ENCODE measurements at regions of chr10 and their contacts with region 1.

Region 1: DNA sequence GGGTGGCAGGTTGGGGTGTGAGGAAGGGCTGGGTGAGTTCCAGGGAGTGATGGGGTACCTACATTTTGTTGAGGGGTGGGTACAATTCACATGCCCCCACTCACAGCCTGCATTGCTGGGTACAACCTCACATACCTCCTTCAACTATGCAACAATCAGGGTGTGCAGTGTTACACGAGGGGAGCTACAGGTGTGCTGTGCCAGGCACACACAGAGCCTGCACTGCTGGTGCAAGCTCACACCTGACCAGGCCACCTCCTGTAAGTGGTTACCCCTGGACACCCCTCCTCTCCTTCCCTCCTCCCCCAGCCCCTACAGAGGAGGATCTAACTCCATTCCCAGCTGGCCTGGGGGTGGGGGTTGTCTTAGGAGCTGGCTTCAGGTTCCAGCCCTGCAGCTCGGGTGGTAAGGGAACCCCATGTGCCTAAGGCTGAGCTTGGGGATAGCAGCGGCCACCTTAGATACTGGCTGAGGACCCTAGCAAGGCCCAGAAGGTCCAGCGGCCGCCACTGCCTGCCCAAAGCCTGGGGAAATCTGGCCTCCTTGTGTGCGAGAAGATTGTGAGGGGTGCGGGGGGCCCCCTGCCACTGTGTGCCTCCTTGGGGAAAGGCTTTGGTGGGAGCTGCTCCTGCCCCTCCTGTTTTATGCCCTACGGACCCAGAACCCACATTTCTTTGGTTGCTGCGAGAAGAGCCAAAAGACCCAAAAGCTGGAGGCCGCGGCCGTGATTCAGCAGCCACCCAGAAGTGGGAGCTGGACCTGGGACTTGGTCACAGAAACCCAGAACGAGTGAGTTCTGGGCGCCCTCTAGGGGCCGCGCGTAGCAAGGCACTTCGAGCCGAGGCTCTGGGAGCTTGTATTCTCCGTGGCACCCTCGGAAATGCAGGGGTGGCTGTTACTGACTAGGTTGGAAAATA is 10.8 kb downstream of the TLX1 start:
- DNase-seq: peak; percentile 91
- ATAC-seq: peak; percentile 49
- H3K4me3 Mint-ChIP-seq: no peak overlapping the region; the same call in 1 of the 2 replicates
- H3K27ac Mint-ChIP-seq: no peak overlapping the region
- H3K4me1 Mint-ChIP-seq: peaks cover 24% of the 10 kb centered on the region
- H3K27me3 Mint-ChIP-seq: peaks cover 100% of the 10 kb centered on the region
- CTCF ChIP-seq: peak; percentile 95

Region 2: DNA sequence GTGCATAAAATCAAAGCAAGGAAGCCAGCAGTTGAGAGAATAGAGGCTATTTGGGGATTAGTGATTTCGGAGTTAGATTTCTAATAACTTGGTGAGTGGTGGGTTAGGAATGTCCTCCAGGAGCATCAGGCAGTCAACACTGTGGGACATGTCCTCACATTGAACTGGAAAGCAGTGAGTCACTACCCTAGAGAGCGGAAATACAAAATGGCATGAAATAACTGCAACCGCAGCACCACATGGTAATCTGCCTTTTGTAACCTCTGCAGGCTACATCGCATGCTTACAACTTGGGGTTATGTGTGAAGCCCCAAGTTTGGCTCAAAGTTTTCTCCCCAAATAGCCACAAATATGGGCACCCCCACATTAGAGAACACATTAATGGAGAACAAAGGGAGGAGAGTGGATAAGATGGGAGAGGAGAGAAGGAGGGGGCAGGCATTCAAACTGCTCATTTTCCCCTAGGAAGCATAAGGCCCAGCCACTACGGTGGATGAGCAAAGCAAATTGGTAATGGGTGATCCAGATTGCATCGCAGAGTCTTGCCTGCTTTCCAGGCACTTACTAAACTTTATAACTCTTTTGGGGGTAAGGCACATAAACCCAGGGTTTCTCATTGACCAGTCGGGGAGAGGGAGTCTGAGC is 251.1 kb before region 1 on chr10:
- CTCF ChIA-PET with region 1: no interaction called
- POLR2A ChIA-PET with region 1: no interaction called
- DNase-seq: no peak
- ATAC-seq: peak; percentile 61
- H3K4me3 Mint-ChIP-seq: no peak overlapping the region
- H3K27ac Mint-ChIP-seq: no peak overlapping the region
- H3K4me1 Mint-ChIP-seq: peaks cover 14% of the 10 kb centered on the region
- H3K27me3 Mint-ChIP-seq: peaks cover 6% of the 10 kb centered on the region; the same call in 1 of the 2 replicates
- CTCF ChIP-seq: no peak

Region 3: DNA sequence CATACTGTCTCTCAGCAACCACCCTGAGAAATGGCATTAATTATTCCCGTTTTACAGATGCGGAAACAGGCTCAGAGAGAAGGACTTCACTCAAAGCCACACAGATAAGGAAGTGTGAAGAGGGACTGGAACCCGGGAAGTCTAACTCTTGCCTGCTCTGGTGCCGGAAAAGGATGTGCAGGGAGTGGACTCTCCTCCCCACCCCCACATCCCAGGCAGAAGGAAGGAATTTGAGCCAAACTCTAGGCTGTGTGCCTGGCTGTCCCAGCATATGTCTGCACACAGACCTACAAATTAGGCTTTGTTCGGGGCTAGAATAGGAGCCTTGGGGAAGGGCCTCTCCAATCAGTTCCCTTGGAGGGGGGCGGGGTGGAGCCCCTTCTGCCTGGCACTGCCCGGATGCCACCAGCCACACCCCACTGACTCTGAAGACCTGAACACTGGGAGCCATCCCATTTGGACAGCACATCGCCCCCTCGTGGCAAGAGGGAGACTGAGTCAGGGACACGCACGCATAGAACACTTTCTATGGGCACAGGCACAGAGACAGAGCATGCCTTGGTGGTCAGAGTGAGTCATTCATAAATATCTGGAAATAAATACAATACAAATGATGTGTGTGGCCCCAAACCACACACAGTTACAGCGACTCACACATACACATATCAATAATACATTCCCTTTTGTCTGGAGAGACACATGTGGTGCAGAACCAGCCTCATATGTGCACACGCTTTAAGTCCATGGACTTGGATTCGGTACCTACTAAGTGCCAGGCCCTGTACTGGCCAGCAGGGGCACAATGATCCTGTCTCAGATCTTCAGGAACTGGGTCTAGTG is 129.1 kb before region 1 on chr10:
- CTCF ChIA-PET with region 1: interaction called, 23 read pairs
- POLR2A ChIA-PET with region 1: no interaction called
- DNase-seq: peak; percentile 84
- ATAC-seq: peak; percentile 68
- H3K4me3 Mint-ChIP-seq: no peak overlapping the region
- H3K27ac Mint-ChIP-seq: no peak overlapping the region
- H3K4me1 Mint-ChIP-seq: peaks cover 33% of the 10 kb centered on the region
- H3K27me3 Mint-ChIP-seq: peaks cover 34% of the 10 kb centered on the region
- CTCF ChIP-seq: peak; percentile 63

Region 4: DNA sequence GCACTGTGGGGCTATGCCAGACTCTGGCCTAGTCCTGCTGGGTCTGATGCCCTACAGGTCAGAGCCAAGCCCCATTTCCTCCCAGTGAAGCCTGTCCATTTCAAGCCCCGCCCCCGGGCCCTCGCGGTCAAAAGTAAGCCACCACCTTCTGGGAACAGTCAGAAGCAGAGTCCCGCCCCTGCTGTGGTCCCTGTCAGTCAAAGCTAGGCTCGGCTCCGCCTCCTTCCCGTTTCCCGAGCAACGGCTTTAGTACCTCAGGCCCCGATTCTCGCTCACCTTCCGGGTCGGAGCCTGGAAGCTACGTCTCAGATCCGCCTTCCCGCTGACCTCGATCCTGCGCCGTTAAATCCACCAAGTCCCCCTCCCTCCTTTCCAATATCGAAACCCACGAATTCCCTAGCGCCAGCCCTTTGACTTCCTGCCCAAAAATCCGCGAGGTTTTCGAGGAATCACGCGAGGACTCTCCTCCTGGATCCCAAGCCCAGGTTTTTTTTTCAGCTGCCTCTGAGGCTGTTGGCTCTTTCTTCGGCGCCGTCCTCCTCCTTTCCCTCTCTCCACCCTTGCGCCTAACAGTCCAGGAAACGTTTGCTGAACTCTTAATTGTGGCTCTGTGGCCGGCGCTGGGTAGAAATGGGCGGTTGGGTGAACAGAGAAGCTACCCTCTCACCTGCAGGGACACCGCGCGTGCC is 99.1 kb before region 1 on chr10:
- CTCF ChIA-PET with region 1: interaction called, 181 read pairs
- POLR2A ChIA-PET with region 1: interaction called, 6 read pairs
- DNase-seq: peak; percentile 99
- ATAC-seq: peak; percentile 86
- H3K4me3 Mint-ChIP-seq: peak overlapping the region; percentile 94
- H3K27ac Mint-ChIP-seq: peak overlapping the region; percentile 92
- H3K4me1 Mint-ChIP-seq: peaks cover 33% of the 10 kb centered on the region
- H3K27me3 Mint-ChIP-seq: peaks cover 59% of the 10 kb centered on the region
- CTCF ChIP-seq: no peak

Region 5: DNA sequence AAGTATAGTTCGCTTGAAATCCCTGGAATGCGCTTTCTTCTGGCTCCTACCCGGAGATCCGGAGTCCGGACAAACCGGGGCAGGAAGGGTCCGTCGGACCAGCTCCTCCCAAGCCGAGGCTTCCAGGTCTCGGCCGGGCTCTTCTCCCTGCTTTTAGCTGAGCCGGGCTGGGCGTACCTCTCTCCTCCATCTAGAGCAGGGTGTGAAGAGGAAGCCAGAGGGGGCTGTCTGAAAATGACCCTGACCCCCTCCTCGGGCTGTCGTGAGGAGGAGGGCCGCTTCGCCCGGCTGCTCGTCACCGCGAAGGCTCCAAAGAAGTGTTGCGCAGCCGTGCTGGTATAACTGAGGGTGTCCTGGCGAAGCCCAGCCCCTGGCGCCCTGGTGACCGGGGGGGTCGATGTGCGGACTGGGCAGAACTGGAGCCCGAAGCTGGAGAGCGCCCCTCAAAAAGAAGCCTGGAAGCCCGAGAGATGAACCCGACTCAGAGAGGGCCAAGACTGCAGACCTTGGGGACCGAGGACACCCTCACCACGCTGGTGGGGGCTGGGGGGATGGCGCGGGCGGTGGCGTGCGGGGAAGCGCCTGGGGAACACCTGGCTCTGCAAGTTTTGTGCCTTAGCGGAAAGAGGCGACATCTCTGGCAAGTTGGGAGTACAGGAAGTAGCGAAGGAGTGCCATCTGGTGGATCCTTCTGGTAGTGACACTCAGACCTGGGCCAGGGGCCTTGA is 74.4 kb before region 1 on chr10:
- CTCF ChIA-PET with region 1: interaction called, 162 read pairs
- POLR2A ChIA-PET with region 1: interaction called, 3 read pairs
- DNase-seq: peak; percentile 89
- ATAC-seq: peak; percentile 26
- H3K4me3 Mint-ChIP-seq: peak overlapping the region; percentile 93
- H3K27ac Mint-ChIP-seq: no peak overlapping the region
- H3K4me1 Mint-ChIP-seq: peaks cover 42% of the 10 kb centered on the region
- H3K27me3 Mint-ChIP-seq: peaks cover 72% of the 10 kb centered on the region
- CTCF ChIP-seq: peak; percentile 68

Region 6: DNA sequence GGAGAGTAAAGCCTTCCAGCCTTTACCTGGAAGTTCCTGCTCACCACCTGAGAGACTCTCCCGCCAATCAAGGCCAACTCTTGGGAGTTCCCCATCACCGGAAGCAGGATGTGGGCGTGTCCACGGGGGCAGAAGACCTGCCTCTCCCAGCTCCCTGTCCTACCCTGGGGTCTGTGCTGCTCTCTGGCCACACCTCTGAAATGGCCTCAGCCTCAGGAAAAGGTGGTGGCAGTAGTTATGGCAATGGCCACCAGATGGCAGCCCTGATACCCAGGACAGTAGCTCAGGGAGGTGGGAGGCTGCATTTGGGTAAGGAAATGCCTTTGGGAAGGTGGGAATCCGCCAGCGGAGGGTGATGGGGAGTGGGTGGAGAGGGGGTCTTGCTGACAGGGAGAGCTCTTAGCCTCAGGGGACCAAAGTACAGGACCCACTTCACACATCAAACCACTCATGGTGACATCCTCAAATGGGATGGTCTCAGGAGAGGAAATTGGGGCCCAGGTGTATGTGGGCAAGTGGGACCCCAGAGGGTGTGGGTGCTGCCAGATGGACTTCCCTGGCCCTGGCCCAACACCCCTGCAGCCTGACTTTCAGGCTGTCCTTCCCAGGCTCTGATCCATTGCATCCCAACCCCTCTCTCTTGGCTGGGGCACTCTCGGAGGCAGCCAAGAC is 46.2 kb before region 1 on chr10:
- CTCF ChIA-PET with region 1: interaction called, 509 read pairs
- POLR2A ChIA-PET with region 1: interaction called, 18 read pairs
- DNase-seq: peak; percentile 99
- ATAC-seq: peak; percentile 99
- H3K4me3 Mint-ChIP-seq: no peak overlapping the region
- H3K27ac Mint-ChIP-seq: no peak overlapping the region
- H3K4me1 Mint-ChIP-seq: peaks cover 22% of the 10 kb centered on the region
- H3K27me3 Mint-ChIP-seq: peaks cover 12% of the 10 kb centered on the region
- CTCF ChIP-seq: peak; percentile 64

Region 7: DNA sequence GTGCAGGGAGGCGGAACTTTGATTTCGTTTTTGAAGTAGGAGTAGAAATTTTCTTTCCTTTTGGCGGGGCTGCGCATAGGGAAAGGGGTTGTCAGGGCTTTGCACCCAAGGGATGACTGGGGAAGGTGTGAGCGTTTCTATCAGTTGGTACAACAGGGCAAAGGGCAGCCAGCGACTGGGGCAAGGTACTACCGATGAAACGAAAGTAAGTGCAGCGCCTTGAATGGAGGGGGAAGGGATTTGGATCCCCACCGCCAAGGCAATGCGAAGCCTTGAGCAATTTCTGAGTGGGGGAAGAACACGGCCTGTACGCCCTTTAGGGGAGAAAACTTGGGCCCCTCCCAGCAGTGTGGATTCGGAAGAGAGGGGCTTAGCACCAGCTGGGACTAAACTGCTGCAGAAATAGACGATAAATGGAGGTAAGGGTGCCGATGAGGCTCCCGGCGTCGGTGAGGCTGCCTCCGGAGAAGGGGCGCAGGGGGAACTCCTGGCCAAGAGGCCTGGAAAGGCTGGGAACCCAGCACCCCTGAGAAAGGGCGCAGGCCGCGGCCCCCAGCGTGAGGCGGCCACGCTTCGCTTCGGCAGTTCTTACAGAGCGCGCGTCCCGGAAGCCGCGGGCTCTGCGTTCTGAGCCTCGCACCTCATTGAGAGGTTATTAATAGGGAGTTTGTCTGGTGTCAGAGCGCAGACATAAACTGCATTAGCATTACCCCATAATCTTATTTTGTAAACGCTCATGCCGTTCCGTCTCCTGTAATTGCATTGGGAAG is 20.8 kb before region 1 on chr10:
- CTCF ChIA-PET with region 1: interaction called, 73 read pairs
- POLR2A ChIA-PET with region 1: no interaction called
- DNase-seq: no peak
- ATAC-seq: no peak
- H3K4me3 Mint-ChIP-seq: peak overlapping the region; percentile 72
- H3K27ac Mint-ChIP-seq: no peak overlapping the region
- H3K4me1 Mint-ChIP-seq: peaks cover 20% of the 10 kb centered on the region
- H3K27me3 Mint-ChIP-seq: peaks cover 98% of the 10 kb centered on the region
- CTCF ChIP-seq: no peak

Region 8: DNA sequence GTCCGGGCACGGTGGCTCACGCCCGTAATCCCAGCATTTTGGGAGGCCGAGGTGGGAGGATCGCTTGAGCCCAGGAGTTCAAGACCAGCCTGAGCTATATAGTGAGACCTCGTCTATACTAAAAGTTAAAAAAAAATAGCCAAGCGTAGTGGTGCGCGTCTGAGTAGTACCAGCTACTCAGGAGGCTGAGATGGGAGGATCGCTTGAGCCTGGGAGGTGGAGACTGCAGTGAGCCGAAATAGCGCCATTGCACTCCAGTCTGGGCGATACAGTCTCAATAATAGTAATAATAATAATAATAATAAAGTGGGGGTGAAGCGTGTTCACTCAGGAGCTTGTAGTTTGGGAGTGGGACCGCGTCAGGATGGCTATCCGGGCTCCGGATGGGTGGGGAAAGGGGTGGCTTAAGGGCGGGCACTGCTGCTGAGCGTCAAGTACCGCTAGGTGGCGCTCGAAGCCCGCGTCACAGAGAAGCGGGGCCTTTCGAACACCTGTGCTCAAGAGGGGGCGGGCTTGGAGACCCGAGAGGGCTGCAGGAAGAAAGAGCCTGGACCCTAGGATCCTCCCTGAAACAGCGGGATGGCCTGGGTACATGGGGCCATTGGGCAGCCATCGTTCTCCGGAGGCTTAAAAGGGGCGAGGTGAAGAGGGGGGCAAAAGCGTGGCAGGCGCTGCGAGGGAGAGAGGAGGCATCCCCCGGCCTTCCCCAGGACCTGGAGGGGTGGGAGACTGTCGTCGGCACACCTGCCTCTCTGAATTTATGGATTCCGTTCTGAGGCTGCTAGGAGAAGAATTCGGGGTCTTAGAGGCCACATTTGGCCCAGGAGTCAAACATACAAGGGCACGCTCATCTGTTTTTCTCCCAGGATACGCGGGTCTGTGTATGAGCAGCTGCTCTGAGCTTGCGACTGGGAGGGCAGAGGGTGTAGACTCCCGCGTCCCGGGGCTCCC is 72.8 kb after region 1 on chr10:
- CTCF ChIA-PET with region 1: interaction called, 21 read pairs
- POLR2A ChIA-PET with region 1: no interaction called
- DNase-seq: peak; percentile 93
- ATAC-seq: peak; percentile 65
- H3K4me3 Mint-ChIP-seq: peak overlapping the region; percentile 76
- H3K27ac Mint-ChIP-seq: no peak overlapping the region
- H3K4me1 Mint-ChIP-seq: peaks cover 30% of the 10 kb centered on the region
- H3K27me3 Mint-ChIP-seq: peaks cover 96% of the 10 kb centered on the region
- CTCF ChIP-seq: peak; percentile 83

Region 9: DNA sequence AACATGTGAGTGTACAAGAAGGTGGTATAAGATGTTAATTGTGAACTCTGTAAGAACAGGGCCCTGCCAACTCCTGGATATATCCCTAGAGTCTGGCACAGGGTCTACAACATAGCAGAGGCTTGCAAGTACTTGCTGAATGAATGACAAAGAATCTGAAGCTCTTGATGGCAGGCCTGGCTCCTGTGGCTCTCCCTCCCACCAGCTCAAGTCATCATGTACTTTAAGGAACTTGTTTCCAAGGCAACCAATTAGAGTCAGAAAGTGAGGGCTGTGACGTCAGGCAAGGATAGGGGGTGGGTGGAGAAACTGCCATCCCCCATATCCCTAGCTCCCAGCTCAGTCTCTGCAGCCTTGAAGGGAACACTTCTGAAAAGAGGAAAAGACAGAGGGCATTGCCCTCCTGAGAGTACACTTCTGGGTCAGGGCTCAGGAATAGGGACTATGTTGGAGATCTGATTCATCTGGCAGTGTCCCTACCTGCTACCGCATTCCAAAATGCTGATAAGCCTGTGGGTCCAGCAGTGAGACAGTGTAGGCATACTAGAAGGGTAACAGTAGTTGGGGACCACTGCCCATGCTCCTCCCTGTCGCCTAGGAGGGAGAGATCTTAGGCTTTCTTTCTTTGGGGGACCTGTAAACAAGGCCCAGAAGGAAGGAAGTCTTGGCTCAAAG is 177.5 kb after region 1 on chr10:
- CTCF ChIA-PET with region 1: no interaction called
- POLR2A ChIA-PET with region 1: no interaction called
- DNase-seq: peak; percentile 38
- ATAC-seq: peak; percentile 43
- H3K4me3 Mint-ChIP-seq: no peak overlapping the region
- H3K27ac Mint-ChIP-seq: no peak overlapping the region
- H3K4me1 Mint-ChIP-seq: peaks cover 21% of the 10 kb centered on the region
- H3K27me3 Mint-ChIP-seq: peaks cover 3% of the 10 kb centered on the region; the same call in 1 of the 2 replicates
- CTCF ChIP-seq: no peak